MCF 10A (cell line): ENCODE measurements at regions of chr4 and their contacts with region 1.

Region 1: GRCh38 chr4:57037982-57038604 is 59.4 kb downstream of the POLR2B start:
- DNase-seq: peak; percentile 76
- H3K4me3 Mint-ChIP-seq: no peak overlapping the region
- H3K27ac Mint-ChIP-seq: no peak overlapping the region
- H3K4me1 Mint-ChIP-seq: peaks cover 24% of the 10 kb centered on the region
- H3K27me3 Mint-ChIP-seq: no peaks in the 10 kb centered on the region
- CTCF ChIP-seq: peak; percentile 89

Region 2: DNA sequence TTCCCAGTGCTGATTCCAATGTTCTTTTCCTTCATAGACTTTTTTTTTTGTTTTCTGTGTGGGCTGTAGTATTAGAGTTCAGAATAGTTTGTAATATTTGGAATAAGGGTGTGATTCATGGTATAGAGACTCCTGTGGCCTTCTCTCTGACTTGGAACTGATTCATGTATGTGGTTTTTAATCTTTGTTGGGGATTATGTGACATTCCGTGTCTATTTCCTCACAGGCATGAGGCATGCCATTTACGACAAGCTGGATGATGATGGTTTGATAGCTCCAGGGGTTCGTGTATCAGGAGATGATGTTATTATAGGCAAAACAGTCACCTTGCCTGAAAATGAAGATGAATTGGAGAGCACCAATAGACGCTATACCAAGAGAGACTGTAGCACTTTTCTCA is 15.0 kb before region 1 on chr4:
- CTCF ChIA-PET with region 1: interaction called, 18 read pairs
- POLR2A ChIA-PET with region 1: interaction called, 3 read pairs
- intact Hi-C with region 1: no loop called
- DNase-seq: peak; percentile 80
- H3K4me3 Mint-ChIP-seq: no peak overlapping the region
- H3K27ac Mint-ChIP-seq: peak overlapping the region; percentile 33
- H3K4me1 Mint-ChIP-seq: peaks cover 36% of the 10 kb centered on the region
- H3K27me3 Mint-ChIP-seq: no peaks in the 10 kb centered on the region
- CTCF ChIP-seq: no peak

Region 3: GRCh38 chr4:57080781-57081650 is 42.9 kb after region 1 on chr4:
- CTCF ChIA-PET with region 1: interaction called, 12 read pairs
- POLR2A ChIA-PET with region 1: interaction called, 15 read pairs
- intact Hi-C with region 1: no loop called
- DNase-seq: peak; percentile 85
- H3K4me3 Mint-ChIP-seq: peak overlapping the region; percentile 3
- H3K27ac Mint-ChIP-seq: peak overlapping the region; percentile 93
- H3K4me1 Mint-ChIP-seq: peaks cover 38% of the 10 kb centered on the region
- H3K27me3 Mint-ChIP-seq: no peaks in the 10 kb centered on the region
- CTCF ChIP-seq: no peak

Region 4: DNA sequence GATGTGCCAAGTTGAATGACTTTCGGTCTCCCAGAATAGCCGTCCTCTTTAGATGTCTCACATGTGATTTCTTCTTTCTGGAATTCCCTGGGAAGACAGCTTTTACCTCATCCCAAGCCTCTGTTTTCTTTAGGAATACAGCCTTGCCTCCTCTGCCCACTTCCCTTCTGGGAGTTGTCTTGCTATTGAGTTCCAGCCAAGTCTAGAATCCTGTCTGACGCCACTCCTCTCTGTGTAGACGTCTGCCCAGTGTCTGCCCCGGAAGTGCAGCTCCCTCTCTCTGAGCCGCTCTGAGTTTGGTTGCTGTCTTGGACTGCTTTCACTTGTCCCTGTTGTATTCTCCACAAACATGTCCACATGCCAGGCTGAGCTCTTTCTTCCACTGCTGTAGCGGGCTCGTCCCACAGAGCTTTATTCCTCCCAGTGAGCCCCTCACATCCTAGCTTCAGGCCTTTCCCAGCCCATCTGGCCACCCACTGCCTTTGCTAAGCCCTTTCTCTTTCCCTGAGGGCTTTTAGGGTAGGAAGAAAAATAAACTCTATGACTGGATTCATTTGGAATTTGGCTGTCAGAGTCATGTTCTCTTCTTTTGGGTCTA is 81.1 kb after region 1 on chr4:
- CTCF ChIA-PET with region 1: interaction called, 10 read pairs
- POLR2A ChIA-PET with region 1: no interaction called
- intact Hi-C with region 1: loop called (anchors 10 kb)
- DNase-seq: peak; percentile 95
- H3K4me3 Mint-ChIP-seq: peak overlapping the region; percentile 65
- H3K27ac Mint-ChIP-seq: peak overlapping the region; percentile 96
- H3K4me1 Mint-ChIP-seq: peaks cover 27% of the 10 kb centered on the region
- H3K27me3 Mint-ChIP-seq: no peaks in the 10 kb centered on the region
- CTCF ChIP-seq: no peak

Region 5: DNA sequence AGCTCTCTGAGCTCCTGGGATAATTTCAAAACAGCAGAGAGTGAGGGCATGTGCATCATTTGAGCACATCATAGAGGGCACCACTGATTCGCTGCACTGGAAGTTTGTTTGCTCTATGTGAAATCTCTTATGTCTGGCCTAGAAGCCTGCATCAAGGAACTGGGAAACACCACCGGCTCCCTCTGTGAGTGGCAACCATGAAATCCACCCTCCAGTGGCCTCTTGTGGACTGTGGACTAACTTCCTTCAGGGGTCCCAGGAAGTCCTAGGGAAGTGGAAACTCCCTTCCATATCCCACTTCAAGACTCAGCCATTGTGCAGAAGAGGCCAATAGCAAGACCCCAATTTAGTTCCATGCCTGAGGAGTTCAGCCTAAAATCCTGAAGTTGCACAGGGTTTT is 120.1 kb after region 1 on chr4:
- CTCF ChIA-PET with region 1: interaction called, 213 read pairs
- POLR2A ChIA-PET with region 1: interaction called, 8 read pairs
- intact Hi-C with region 1: loop called (anchors 1 kb)
- DNase-seq: no peak
- H3K4me3 Mint-ChIP-seq: no peak overlapping the region
- H3K27ac Mint-ChIP-seq: no peak overlapping the region
- H3K4me1 Mint-ChIP-seq: peaks cover 26% of the 10 kb centered on the region
- H3K27me3 Mint-ChIP-seq: no peaks in the 10 kb centered on the region
- CTCF ChIP-seq: no peak

Region 6: GRCh38 chr4:57405385-57405784 is 367.3 kb after region 1 on chr4:
- CTCF ChIA-PET with region 1: interaction called, 10 read pairs
- POLR2A ChIA-PET with region 1: no interaction called
- intact Hi-C with region 1: no loop called
- DNase-seq: peak; percentile 70
- H3K4me3 Mint-ChIP-seq: no peak overlapping the region
- H3K27ac Mint-ChIP-seq: peak overlapping the region; percentile 74
- H3K4me1 Mint-ChIP-seq: peaks cover 24% of the 10 kb centered on the region
- H3K27me3 Mint-ChIP-seq: no peaks in the 10 kb centered on the region
- CTCF ChIP-seq: no peak